ENCODE measurements at regions of chr3 and their contacts with region 1.

Region 1: GRCh38 chr3:189270248-189270832 is 98.6 kb downstream of the TPRG1 start:
- DNase-seq: peak in 6 of 9 donors; percentile 18 to 47 (median 32)
- ATAC-seq: peak; percentile 53
- H3K4me3 ChIP-seq: no peak overlapping the region
- H3K4me3 Mint-ChIP-seq: no peak overlapping the region
- H3K27ac ChIP-seq: no peak overlapping the region
- H3K27ac Mint-ChIP-seq: peak overlapping the region in 1 of 9 donors; percentile 27
- H3K4me1 ChIP-seq: peaks cover 0 to 15% of the 10 kb centered on the region in 2 donors
- H3K4me1 Mint-ChIP-seq: peaks cover 5 to 34% (median 20%) of the 10 kb centered on the region in 7 donors
- H3K27me3 ChIP-seq: no peaks in the 10 kb centered on the region
- H3K27me3 Mint-ChIP-seq: no peaks in the 10 kb centered on the region

Region 2: DNA sequence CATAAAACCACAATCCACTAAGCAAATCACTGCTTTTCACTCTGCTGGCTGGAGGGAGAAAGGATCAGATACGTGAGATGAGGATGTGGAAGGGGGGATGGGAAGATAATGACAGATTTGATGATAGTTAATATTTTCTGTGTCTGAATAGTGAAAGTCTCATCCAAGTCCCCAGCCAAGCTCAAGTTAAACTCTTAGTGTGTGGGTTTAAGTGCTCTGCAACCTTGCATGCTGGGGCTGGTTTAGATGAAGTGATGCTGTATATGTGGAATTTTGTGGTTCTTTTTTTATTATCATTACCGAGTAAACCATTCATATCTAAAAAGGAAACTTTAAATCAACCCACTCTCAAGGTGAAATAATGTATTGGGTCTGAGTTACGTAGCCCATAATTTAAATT is 12.4 kb after region 1 on chr3:
- CTCF ChIA-PET with region 1: interaction called, 11 read pairs
- POLR2A ChIA-PET with region 1: no interaction called
- intact Hi-C with region 1: no loop called
- DNase-seq: no peak
- ATAC-seq: no peak
- H3K4me3 ChIP-seq: no peak overlapping the region
- H3K4me3 Mint-ChIP-seq: no peak overlapping the region
- H3K27ac ChIP-seq: no peak overlapping the region
- H3K27ac Mint-ChIP-seq: no peak overlapping the region
- H3K4me1 ChIP-seq: peaks cover 6 to 23% of the 10 kb centered on the region in 2 donors
- H3K4me1 Mint-ChIP-seq: peaks cover 13 to 41% (median 31%) of the 10 kb centered on the region in 7 donors
- H3K27me3 ChIP-seq: no peaks in the 10 kb centered on the region
- H3K27me3 Mint-ChIP-seq: peaks cover 0 to 3% (median 0%) of the 10 kb centered on the region in 5 donors

Region 3: GRCh38 chr3:189355481-189356201 is 85.3 kb after region 1 on chr3:
- CTCF ChIA-PET with region 1: interaction called, 4 read pairs
- POLR2A ChIA-PET with region 1: no interaction called
- intact Hi-C with region 1: loop called (anchors 1 to 2 kb)
- DNase-seq: peak in 8 of 9 donors; percentile 27 to 76 (median 62)
- ATAC-seq: peak; percentile 83
- H3K4me3 ChIP-seq: peak overlapping the region; percentile 27
- H3K4me3 Mint-ChIP-seq: peak overlapping the region; percentile 68 to 86 (median 78)
- H3K27ac ChIP-seq: peak overlapping the region; percentile 47
- H3K27ac Mint-ChIP-seq: peak overlapping the region; percentile 85 to 98 (median 92)
- H3K4me1 ChIP-seq: peaks cover 12 to 21% of the 10 kb centered on the region in 2 donors
- H3K4me1 Mint-ChIP-seq: peaks cover 11 to 43% (median 34%) of the 10 kb centered on the region in 7 donors
- H3K27me3 ChIP-seq: no peaks in the 10 kb centered on the region
- H3K27me3 Mint-ChIP-seq: no peaks in the 10 kb centered on the region

Region 4: DNA sequence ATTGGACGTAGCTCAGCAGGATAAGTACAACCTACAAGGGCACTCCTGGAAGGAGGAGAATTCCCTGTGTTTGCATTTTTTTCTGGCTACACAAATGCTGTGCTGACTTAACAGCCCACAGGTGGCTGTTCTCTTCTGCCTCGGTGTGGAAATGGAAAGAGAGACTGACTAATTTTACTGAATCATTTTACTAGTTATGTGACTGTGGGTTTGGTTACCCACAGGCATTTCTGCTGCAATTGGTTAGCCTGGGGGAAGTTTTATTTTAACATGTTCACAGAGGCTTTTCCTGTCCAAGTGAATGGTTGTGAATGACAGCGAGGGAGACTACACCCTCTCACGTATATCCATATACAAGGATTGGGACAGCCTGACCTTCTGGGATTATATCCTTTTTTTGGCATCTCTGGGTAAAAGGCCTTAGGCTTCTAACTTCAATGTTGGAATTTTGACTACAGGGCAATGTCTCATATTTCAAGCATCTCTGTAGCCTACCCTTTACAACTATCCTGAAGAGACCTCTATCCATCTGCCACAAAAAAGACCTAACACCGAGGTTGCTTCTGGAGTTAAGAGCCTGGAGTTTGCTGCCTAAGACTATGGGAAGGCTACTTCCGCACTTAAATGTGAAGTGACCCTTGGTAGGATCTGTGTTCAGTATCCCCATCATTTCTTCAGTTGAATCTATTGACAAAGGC is 293.7 kb after region 1 on chr3:
- CTCF ChIA-PET with region 1: no interaction called
- POLR2A ChIA-PET with region 1: no interaction called
- intact Hi-C with region 1: loop called in 1 of 2 experiments (anchors 5 kb)
- DNase-seq: peak in 1 of 9 donors; percentile 59
- ATAC-seq: no peak
- H3K4me3 ChIP-seq: no peak overlapping the region
- H3K4me3 Mint-ChIP-seq: peak overlapping the region in 1 of 10 donors; percentile 12
- H3K27ac ChIP-seq: no peak overlapping the region
- H3K27ac Mint-ChIP-seq: peak overlapping the region in 1 of 9 donors; percentile 35
- H3K4me1 ChIP-seq: no peaks in the 10 kb centered on the region
- H3K4me1 Mint-ChIP-seq: peaks cover 0 to 38% (median 2%) of the 10 kb centered on the region in 7 donors
- H3K27me3 ChIP-seq: no peaks in the 10 kb centered on the region
- H3K27me3 Mint-ChIP-seq: peaks cover 0 to 2% (median 0%) of the 10 kb centered on the region in 5 donors

Region 5: GRCh38 chr3:189710620-189711402 is 440.5 kb after region 1 on chr3:
- CTCF ChIA-PET with region 1: no interaction called
- POLR2A ChIA-PET with region 1: no interaction called
- intact Hi-C with region 1: loop called in 1 of 2 experiments (anchors 10 kb)
- DNase-seq: no peak
- ATAC-seq: no peak
- H3K4me3 ChIP-seq: no peak overlapping the region
- H3K4me3 Mint-ChIP-seq: no peak overlapping the region
- H3K27ac ChIP-seq: no peak overlapping the region
- H3K27ac Mint-ChIP-seq: no peak overlapping the region
- H3K4me1 ChIP-seq: no peaks in the 10 kb centered on the region
- H3K4me1 Mint-ChIP-seq: peaks cover 2 to 20% (median 13%) of the 10 kb centered on the region in 7 donors
- H3K27me3 ChIP-seq: no peaks in the 10 kb centered on the region
- H3K27me3 Mint-ChIP-seq: no peaks in the 10 kb centered on the region

Region 6: GRCh38 chr3:190205739-190206138 is 935.4 kb after region 1 on chr3:
- CTCF ChIA-PET with region 1: no interaction called
- POLR2A ChIA-PET with region 1: no interaction called
- intact Hi-C with region 1: loop called (anchors 5 kb)
- DNase-seq: no peak
- ATAC-seq: peak; percentile 59
- H3K4me3 ChIP-seq: no peak overlapping the region
- H3K4me3 Mint-ChIP-seq: no peak overlapping the region
- H3K27ac ChIP-seq: no peak overlapping the region
- H3K27ac Mint-ChIP-seq: no peak overlapping the region
- H3K4me1 ChIP-seq: no peaks in the 10 kb centered on the region
- H3K4me1 Mint-ChIP-seq: peaks cover 0 to 4% (median 0%) of the 10 kb centered on the region in 7 donors
- H3K27me3 ChIP-seq: no peaks in the 10 kb centered on the region
- H3K27me3 Mint-ChIP-seq: peaks cover 4 to 40% (median 9%) of the 10 kb centered on the region in 5 donors

Measured in naive thymus-derived CD4-positive, alpha-beta T cell (primary cell).